IMR-90 (cell line): ENCODE measurements at regions of chr3 and their contacts with region 1.

Region 1: DNA sequence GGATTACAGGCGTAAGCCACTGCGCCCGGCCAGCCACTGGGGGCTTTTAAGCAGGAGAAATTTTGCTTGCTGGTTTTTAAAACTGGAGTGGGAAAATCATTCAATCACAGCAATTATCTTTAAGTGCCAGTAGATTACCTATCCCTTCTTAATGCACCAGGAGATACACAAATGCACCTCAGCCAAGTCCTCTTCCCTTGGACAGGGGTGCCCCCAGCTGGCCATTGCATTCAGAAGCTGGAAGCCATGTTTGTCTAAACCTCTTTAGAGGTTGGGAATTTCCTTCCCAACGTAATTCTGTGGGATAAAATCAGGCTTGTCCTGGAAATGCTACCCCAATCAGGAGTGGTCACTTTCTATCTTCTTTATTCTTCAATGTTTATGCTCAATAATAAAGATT is 26.6 kb downstream of the MIX23 start:
- DNase-seq: peak; percentile 54
- ATAC-seq: peak; percentile 75
- H3K4me3 ChIP-seq: no peak overlapping the region
- H3K27ac ChIP-seq: no peak overlapping the region
- H3K4me1 ChIP-seq: no peaks in the 10 kb centered on the region
- H3K27me3 ChIP-seq: no peaks in the 10 kb centered on the region
- CTCF ChIP-seq: peak; percentile 55
- POLR2A ChIP-seq: no peak
- RAD21 ChIP-seq: peak; percentile 66

Region 2: GRCh38 chr3:121809249-121809648 is 547.2 kb before region 1 on chr3:
- CTCF ChIA-PET with region 1: no interaction called
- POLR2A ChIA-PET with region 1: no interaction called
- dilution Hi-C with region 1: no loop called
- in situ Hi-C with region 1: no loop called
- intact Hi-C with region 1: loop called (anchors 10 kb)
- DNase-seq: no peak
- ATAC-seq: no peak
- H3K4me3 ChIP-seq: no peak overlapping the region
- H3K27ac ChIP-seq: no peak overlapping the region
- H3K4me1 ChIP-seq: no peaks in the 10 kb centered on the region
- H3K27me3 ChIP-seq: no peaks in the 10 kb centered on the region
- CTCF ChIP-seq: no peak
- POLR2A ChIP-seq: no peak
- RAD21 ChIP-seq: no peak

Region 3: GRCh38 chr3:122268257-122269024 is 88.0 kb before region 1 on chr3:
- CTCF ChIA-PET with region 1: no interaction called
- POLR2A ChIA-PET with region 1: no interaction called
- dilution Hi-C with region 1: no loop called
- in situ Hi-C with region 1: no loop called
- intact Hi-C with region 1: no loop called
- DNase-seq: no peak
- ATAC-seq: no peak
- H3K4me3 ChIP-seq: no peak overlapping the region
- H3K27ac ChIP-seq: no peak overlapping the region
- H3K4me1 ChIP-seq: no peaks in the 10 kb centered on the region
- H3K27me3 ChIP-seq: peaks cover 7% of the 10 kb centered on the region
- CTCF ChIP-seq: no peak
- POLR2A ChIP-seq: no peak
- RAD21 ChIP-seq: no peak

Region 4: DNA sequence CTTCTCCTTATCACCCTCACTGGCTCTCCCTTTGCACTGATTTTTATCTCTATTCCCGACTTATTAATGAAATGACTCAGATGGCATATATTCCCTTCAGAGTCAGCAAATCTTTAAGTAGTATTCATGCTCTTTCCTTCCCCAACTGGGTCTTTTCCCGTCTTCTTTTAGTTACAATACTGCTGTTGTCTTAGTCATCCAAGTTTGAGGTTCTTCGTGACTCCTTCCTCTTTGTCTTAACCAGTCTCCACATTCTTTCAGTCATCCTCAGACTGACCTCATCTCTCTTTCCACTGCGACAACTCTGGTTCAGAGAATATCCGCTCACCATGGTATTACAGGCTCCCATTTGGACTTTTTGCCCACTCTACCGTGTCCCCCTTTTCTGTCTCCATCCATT is 47.1 kb after region 1 on chr3:
- CTCF ChIA-PET with region 1: no interaction called
- POLR2A ChIA-PET with region 1: no interaction called
- dilution Hi-C with region 1: no loop called
- in situ Hi-C with region 1: no loop called
- intact Hi-C with region 1: no loop called
- DNase-seq: peak; percentile 61
- ATAC-seq: no peak
- H3K4me3 ChIP-seq: no peak overlapping the region
- H3K27ac ChIP-seq: no peak overlapping the region
- H3K4me1 ChIP-seq: no peaks in the 10 kb centered on the region
- H3K27me3 ChIP-seq: no peaks in the 10 kb centered on the region
- CTCF ChIP-seq: no peak
- POLR2A ChIP-seq: no peak
- RAD21 ChIP-seq: no peak